Kidney (tissue), 22 donors: ENCODE measurements at regions of chr1 and their contacts with region 1.

Region 1: GRCh38 chr1:19096036-19096833 is 113.8 kb downstream of the UBR4 start:
- DNase-seq: peak in 3 of 5 donors; percentile 54 to 65 (median 61)
- H3K4me3 ChIP-seq: no peak overlapping the region
- H3K27ac ChIP-seq: peak overlapping the region in 1 of 2 donors; percentile 10
- H3K4me1 ChIP-seq: peaks cover 0 to 18% (median 17%) of the 10 kb centered on the region in 3 donors
- H3K27me3 ChIP-seq: no peaks in the 10 kb centered on the region
- CTCF ChIP-seq: peak; percentile 80

Region 2: DNA sequence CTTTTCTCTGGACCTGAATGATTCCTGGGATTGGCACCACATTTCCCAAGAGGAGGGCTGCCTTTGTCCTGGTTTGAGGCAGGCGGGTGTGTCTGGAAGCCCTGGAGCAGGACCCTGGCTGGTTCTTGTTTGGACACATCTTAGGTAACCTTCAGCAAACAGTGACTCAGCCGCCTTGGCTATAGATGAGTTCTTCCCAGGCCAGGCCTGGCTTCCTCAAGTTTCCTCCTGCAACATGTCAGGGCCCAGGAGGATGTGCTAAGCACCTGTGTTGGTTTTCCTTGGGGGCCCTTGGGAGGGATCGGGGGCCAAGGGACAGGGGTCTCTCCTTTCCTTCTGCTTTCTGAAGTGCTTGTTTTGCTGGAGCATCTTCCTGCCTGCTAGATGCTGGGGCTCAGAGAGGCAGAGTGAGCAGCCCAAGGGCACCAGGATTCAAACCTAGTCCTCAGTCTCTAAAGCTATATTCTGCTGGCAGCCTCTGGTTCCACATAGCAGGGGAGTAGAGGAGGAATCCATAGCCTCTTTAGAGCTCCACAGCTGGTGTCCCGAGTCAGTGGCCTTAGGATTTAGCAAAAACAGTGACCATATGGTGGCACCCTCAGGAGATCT is 427.3 kb before region 1 on chr1:
- intact Hi-C with region 1: no loop called
- DNase-seq: no peak
- H3K4me3 ChIP-seq: no peak overlapping the region
- H3K27ac ChIP-seq: no peak overlapping the region
- H3K4me1 ChIP-seq: no peaks in the 10 kb centered on the region
- H3K27me3 ChIP-seq: peaks cover 3% of the 10 kb centered on the region
- CTCF ChIP-seq: no peak

Region 3: GRCh38 chr1:18769140-18769539 is 327.1 kb before region 1 on chr1:
- intact Hi-C with region 1: no loop called
- DNase-seq: no peak
- H3K4me3 ChIP-seq: no peak overlapping the region
- H3K27ac ChIP-seq: no peak overlapping the region
- H3K4me1 ChIP-seq: no peaks in the 10 kb centered on the region
- H3K27me3 ChIP-seq: no peaks in the 10 kb centered on the region
- CTCF ChIP-seq: no peak

Region 4: DNA sequence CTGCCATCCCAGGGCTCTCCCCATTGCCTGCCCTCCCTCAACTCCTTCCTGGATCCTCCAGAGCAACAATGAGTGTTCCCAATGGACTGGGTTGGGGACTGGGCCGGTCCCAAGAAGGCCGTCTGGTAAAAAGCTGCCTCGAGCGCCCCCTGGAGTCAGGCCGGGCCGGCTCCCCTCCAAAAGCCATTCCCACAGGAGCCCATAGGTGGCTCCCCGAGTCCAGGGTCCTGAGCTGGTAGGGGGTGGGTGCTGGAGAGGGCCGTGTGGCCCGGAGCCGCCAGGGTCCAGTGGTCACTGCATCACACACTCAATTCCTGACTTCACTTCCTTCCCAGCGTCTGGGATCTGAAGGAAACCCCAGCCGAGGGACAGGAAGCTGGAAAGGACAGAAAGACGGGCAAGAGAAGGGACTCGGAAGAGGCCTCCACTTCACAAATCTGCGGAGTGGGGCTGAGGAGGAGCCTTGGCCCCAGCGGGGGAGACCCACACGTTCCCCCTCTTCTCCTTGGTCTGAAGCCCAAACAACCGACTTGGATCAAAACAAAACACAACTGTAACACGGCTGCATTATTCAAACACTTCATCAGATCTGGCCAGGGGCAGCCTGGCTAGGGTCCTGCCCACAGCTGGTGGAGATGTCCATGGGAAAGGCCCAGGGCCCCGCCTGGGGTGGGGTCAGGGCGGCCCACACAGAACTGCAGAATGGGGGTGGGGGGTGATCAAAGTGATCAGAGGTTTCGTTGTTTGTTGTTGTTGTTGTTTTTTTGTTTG is 183.0 kb before region 1 on chr1:
- intact Hi-C with region 1: loop called (anchors 10 kb)
- DNase-seq: peak; percentile 92 to 96 (median 93)
- H3K4me3 ChIP-seq: no peak overlapping the region
- H3K27ac ChIP-seq: peak overlapping the region; percentile 49 to 62
- H3K4me1 ChIP-seq: peaks cover 0 to 9% (median 9%) of the 10 kb centered on the region in 3 donors
- H3K27me3 ChIP-seq: no peaks in the 10 kb centered on the region
- CTCF ChIP-seq: peak; percentile 98

Region 5: GRCh38 chr1:19477284-19478249 is 381.3 kb after region 1 on chr1:
- intact Hi-C with region 1: no loop called
- DNase-seq: no peak
- H3K4me3 ChIP-seq: no peak overlapping the region
- H3K27ac ChIP-seq: peak overlapping the region in 1 of 2 donors; percentile 59
- H3K4me1 ChIP-seq: peaks cover 0 to 35% (median 22%) of the 10 kb centered on the region in 3 donors
- H3K27me3 ChIP-seq: no peaks in the 10 kb centered on the region
- CTCF ChIP-seq: no peak